HepG2 (cell line): ENCODE measurements at regions of chr7 and their contacts with region 1.

Region 1: GRCh38 chr7:6447581-6448199 is at the start of gene DAGLB:
- DNase-seq: peak; percentile 85
- ATAC-seq: peak; percentile 75
- H3K4me3 ChIP-seq: peak within 1 kb of the TSS; percentile 73 to 98 (median 88)
- H3K27ac ChIP-seq: peak within 1 kb of the TSS; percentile 93
- H3K4me1 ChIP-seq: peaks cover 27% of the 10 kb centered on the region
- H3K27me3 ChIP-seq: no peaks in the 10 kb centered on the region; a peak in 1 of 5 replicates
- CTCF ChIP-seq: no peak
- EP300 ChIP-seq: no peak
- POLR2A ChIP-seq: peak; percentile 81 to 85
- RAD21 ChIP-seq: no peak
- total RNA-seq, gene DAGLB: 3.6 and 7.9 TPM in 2 replicates

Region 2: DNA sequence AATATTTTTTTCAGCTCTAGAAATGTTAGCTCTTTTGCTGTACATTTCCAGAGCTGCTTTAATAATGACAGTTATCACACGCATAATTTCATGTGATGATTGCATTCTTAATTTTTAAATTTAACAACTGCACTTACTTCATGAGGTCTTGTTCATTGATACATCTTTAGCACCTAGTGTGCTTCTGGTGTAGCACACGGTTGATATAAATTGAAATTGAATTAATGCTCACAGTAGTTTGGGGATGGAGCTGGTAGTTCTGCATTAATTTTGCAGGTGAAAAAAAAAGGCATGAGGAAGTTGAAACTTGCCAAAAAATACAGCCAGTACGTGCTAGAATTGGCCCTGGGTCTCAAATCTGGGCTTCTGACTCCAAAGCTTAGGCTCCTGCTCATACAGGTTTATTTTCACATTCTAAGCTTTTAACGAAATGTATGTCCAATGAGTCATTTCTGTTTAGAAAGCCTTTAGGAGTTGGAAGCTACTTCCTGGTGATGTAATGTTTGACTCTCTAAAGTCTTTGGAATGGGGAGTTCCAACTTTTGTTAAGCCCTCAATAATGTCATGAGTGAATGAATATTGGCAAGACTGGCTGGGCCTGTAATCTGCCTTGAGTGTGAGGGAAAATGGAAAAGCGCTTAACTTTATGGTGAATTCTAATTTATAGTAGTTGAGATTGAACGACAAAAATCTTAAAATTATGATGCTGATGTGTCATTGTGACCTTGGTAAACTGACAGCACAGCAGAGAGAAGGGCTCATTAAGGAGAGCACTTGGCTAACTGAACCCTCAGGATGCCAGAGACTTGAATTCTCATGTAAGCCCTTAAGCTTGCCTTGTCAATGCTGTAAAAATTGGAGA is 62.3 kb before region 1 on chr7:
- CTCF ChIA-PET with region 1: no interaction called
- POLR2A ChIA-PET with region 1: no interaction called
- in situ Hi-C with region 1: no loop called
- intact Hi-C with region 1: loop called (anchors 2 kb)
- DNase-seq: peak; percentile 91
- ATAC-seq: peak; percentile 85
- H3K4me3 ChIP-seq: no peak overlapping the region; a peak in 1 of 6 replicates
- H3K27ac ChIP-seq: peak overlapping the region; percentile 38
- H3K4me1 ChIP-seq: peaks cover 61% of the 10 kb centered on the region
- H3K27me3 ChIP-seq: no peaks in the 10 kb centered on the region
- CTCF ChIP-seq: no peak
- EP300 ChIP-seq: no peak; a peak in 1 of 4 replicates
- POLR2A ChIP-seq: no peak
- RAD21 ChIP-seq: no peak

Region 3: DNA sequence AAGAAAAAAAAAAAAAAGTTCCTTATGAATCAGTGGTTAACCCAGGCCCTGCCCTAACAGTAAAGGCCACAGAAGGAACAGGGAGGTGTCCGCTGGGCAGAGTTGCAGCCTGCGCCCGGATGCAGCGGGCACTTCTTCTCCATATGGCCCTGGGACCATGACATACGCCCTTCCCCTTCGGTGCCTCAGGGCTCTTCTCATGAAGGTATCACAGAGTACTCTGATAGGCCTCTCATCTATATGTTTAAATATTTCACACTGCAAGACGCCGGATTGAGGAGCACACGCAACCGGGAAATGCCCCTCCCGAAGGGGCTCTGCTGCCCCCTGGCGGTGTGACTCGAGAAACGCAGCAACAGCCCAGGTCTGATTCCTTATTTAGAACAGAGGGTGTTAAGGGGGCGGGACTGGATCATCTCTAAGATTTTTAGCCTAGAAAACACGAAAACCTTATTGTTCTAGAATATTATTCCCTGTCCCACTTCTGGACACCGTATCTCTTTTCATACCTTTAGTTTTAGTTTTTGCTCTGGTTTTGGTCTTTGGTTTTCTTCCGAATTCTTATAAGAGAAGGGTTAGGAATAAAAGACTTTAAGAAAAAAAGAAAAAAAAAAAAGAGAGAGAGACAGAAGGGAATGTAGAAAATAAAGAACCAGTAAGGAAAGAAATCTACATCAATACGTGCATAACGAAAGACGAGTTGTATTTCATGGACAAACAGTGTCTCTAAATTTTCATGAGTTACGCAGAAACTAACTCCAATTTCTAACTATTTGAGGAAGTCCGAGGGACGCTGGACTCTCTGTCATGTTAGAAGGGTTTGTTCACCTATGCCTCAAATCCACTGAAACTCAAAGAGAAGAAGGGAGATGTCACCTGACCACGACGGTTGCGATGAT is 12.0 kb before region 1 on chr7:
- CTCF ChIA-PET with region 1: no interaction called
- POLR2A ChIA-PET with region 1: interaction called, 10 read pairs
- in situ Hi-C with region 1: no loop called
- intact Hi-C with region 1: no loop called
- DNase-seq: peak; percentile 50
- ATAC-seq: peak; percentile 88
- H3K4me3 ChIP-seq: no peak overlapping the region
- H3K27ac ChIP-seq: no peak overlapping the region
- H3K4me1 ChIP-seq: no peaks in the 10 kb centered on the region
- H3K27me3 ChIP-seq: no peaks in the 10 kb centered on the region
- CTCF ChIP-seq: peak; percentile 89
- EP300 ChIP-seq: no peak
- POLR2A ChIP-seq: no peak
- RAD21 ChIP-seq: peak; percentile 80

Region 4: DNA sequence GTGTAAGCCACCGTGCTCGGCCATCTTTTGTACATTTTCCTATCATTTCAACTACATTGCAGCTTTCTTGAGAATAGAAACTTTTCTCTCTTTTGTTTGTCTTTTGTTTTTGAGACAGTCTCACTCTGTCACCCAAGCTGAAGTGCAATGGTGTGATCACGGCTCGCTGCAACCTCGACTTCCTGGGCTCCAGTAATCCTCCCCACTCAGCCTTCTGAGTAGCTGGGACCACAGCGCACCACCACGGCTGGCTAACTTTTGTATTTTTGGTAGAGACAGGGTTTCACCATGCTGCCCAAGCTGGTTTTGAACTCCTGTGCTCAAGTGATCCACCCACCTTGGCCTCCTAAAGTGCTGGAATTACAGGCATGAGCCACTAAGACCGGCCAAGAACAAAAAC is 31.4 kb after region 1 on chr7:
- CTCF ChIA-PET with region 1: no interaction called
- POLR2A ChIA-PET with region 1: interaction called, 12 read pairs
- in situ Hi-C with region 1: no loop called
- intact Hi-C with region 1: no loop called
- DNase-seq: no peak
- ATAC-seq: no peak
- H3K4me3 ChIP-seq: no peak overlapping the region
- H3K27ac ChIP-seq: no peak overlapping the region
- H3K4me1 ChIP-seq: peaks cover 80% of the 10 kb centered on the region
- H3K27me3 ChIP-seq: no peaks in the 10 kb centered on the region; a peak in 1 of 5 replicates
- CTCF ChIP-seq: no peak
- EP300 ChIP-seq: no peak
- POLR2A ChIP-seq: no peak; a peak in 1 of 4 replicates
- RAD21 ChIP-seq: no peak